ENCODE measurements at regions of chr5 and their contacts with region 1.

Region 1: GRCh38 chr5:7745882-7746610 is 104.9 kb downstream of the CFAP90 start:
- DNase-seq: peak; percentile 76
- H3K4me3 Mint-ChIP-seq: no peak overlapping the region
- H3K27ac Mint-ChIP-seq: no peak overlapping the region
- H3K4me1 Mint-ChIP-seq: no peaks in the 10 kb centered on the region
- H3K27me3 Mint-ChIP-seq: peaks cover 53% of the 10 kb centered on the region
- CTCF ChIP-seq: peak; percentile 81

Region 2: DNA sequence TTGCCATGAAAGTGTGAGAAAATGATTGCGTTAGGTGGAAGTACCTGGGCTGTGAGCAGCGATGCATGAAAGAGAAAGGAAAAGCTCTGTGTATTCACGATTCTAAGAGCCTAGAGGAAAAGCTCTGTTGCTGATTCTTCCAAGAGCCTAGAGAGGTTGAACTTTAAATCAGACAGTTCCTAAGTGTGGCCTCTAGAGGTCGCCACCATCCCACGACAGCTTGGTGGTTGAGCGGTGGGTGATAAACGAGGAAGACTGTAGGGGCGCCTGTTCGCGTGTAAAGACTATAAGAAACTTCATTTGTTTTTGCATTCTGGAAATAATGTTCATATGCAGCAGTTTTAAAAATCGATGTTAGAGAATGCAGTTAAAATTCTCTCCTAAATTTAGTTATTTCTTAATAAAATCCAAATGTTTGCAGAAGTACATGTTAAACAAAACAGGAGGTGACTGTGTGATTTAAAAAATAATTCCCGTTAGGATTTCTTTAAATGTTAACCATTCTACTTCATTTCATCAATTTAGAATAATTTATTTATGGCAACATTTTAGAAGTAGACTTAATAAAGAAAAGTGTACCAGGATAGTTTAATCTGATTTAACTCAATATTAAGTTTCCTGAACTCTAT is 925.1 kb before region 1 on chr5:
- CTCF ChIA-PET with region 1: interaction called, 4 read pairs
- POLR2A ChIA-PET with region 1: no interaction called
- intact Hi-C with region 1: loop called (anchors 1 kb)
- DNase-seq: peak; percentile 33
- H3K4me3 Mint-ChIP-seq: no peak overlapping the region
- H3K27ac Mint-ChIP-seq: no peak overlapping the region
- H3K4me1 Mint-ChIP-seq: peaks cover 11% of the 10 kb centered on the region
- H3K27me3 Mint-ChIP-seq: peaks cover 40% of the 10 kb centered on the region
- CTCF ChIP-seq: peak; percentile 69

Region 3: DNA sequence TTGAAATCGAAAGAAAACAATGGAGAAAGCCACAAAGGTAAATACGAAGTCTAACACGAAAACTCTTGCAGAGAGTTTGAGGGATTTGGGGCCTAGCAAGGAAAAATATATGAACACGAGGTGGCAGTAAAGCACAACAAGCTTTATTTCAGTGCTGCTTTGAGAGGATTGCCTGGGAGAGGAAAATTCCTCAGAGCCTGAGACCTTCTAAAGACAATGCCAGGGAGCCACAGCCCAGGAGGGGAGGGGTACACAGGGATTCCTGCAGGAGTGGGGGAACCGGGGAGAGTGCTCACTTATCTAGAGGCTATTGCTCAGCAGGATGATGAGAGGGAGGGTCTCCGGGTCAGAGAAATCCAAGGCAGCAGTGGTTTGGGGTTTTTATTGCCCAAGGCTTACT is 485.0 kb before region 1 on chr5:
- CTCF ChIA-PET with region 1: interaction called, 37 read pairs
- POLR2A ChIA-PET with region 1: interaction called, 3 read pairs
- intact Hi-C with region 1: loop called (anchors 2 kb)
- DNase-seq: peak; percentile 25
- H3K4me3 Mint-ChIP-seq: no peak overlapping the region
- H3K27ac Mint-ChIP-seq: no peak overlapping the region
- H3K4me1 Mint-ChIP-seq: no peaks in the 10 kb centered on the region
- H3K27me3 Mint-ChIP-seq: peaks cover 2% of the 10 kb centered on the region
- CTCF ChIP-seq: peak; percentile 45

Region 4: GRCh38 chr5:7728076-7728475 is 18.0 kb before region 1 on chr5:
- CTCF ChIA-PET with region 1: interaction called, 11 read pairs
- POLR2A ChIA-PET with region 1: no interaction called
- intact Hi-C with region 1: no loop called
- DNase-seq: no peak
- H3K4me3 Mint-ChIP-seq: no peak overlapping the region
- H3K27ac Mint-ChIP-seq: no peak overlapping the region
- H3K4me1 Mint-ChIP-seq: no peaks in the 10 kb centered on the region
- H3K27me3 Mint-ChIP-seq: peaks cover 67% of the 10 kb centered on the region
- CTCF ChIP-seq: no peak

Measured in MCF 10A (cell line).